CD8-positive, alpha-beta T cell (primary cell): ENCODE measurements at regions of chr6 and their contacts with region 1.

Region 1: GRCh38 chr6:24646782-24647181 is 791 bp upstream of the KIAA0319 start:
- DNase-seq: no peak
- ATAC-seq: no peak
- H3K4me3 ChIP-seq: no peak overlapping the region
- H3K4me3 Mint-ChIP-seq: peak overlapping the region; percentile 81
- H3K27ac ChIP-seq: no peak overlapping the region
- H3K27ac Mint-ChIP-seq: no peak overlapping the region
- H3K4me1 ChIP-seq: peaks cover 9% of the 10 kb centered on the region
- H3K4me1 Mint-ChIP-seq: peaks cover 12% of the 10 kb centered on the region
- H3K27me3 ChIP-seq: peaks cover 0 to 4% of the 10 kb centered on the region in 2 experiments
- H3K27me3 Mint-ChIP-seq: peaks cover 18% of the 10 kb centered on the region
- CTCF ChIP-seq: no peak

Region 2: DNA sequence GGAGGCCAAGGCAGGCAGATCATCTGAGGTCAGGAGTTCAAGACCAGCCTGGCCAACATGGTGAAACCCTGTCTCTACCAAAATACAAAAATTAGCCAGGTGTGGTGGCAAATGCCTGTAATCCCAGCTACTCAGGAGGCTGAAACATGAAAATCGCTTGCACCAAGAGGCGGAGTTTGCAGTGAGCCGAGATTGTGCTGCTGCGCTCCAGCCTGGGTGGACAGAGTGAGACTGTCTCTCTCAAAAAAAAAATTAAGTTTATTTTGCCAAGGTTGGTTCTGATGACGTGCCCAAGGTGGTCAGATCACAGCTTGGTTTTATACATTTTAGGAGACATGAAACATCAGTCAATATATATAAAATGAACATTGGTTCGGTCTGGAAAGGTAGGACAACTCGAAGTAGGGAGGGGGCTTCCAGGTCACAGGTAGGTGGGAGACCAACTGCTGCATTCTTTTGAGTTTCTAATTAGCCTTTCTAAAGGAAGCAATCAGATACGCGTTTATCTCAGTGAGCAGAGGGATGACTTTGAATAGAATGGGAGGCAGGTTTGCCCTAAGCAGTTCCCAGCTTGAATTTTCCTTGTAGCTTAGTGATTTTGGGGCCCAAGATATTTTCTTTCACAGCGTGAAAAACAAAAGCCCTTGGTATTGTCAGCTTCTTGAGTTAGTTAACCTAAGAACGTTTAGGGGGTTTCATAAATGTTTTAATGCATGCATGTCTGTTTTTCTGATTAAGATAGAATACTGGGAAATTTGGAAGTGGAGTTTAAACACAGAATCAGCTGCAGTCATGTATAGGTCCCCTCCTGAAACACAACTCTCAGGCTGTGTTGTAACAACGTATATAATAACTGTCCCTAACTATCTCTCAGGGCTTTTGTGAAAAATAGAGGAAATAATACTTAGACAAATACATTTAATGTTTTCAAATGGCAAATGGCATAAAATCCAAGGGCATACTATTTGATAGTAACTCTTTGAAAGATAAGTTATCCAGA is 36.8 kb after region 1 on chr6:
- CTCF ChIA-PET with region 1: no interaction called
- POLR2A ChIA-PET with region 1: no interaction called
- intact Hi-C with region 1: no loop called
- DNase-seq: no peak
- ATAC-seq: no peak
- H3K4me3 ChIP-seq: no peak overlapping the region
- H3K4me3 Mint-ChIP-seq: no peak overlapping the region
- H3K27ac ChIP-seq: no peak overlapping the region
- H3K27ac Mint-ChIP-seq: no peak overlapping the region
- H3K4me1 ChIP-seq: no peaks in the 10 kb centered on the region
- H3K4me1 Mint-ChIP-seq: peaks cover 3% of the 10 kb centered on the region
- H3K27me3 ChIP-seq: no peaks in the 10 kb centered on the region
- H3K27me3 Mint-ChIP-seq: no peaks in the 10 kb centered on the region
- CTCF ChIP-seq: no peak

Region 3: GRCh38 chr6:24774696-24775519 is 128.1 kb after region 1 on chr6 and contains the start of gene GMNN:
- CTCF ChIA-PET with region 1: no interaction called
- POLR2A ChIA-PET with region 1: no interaction called
- intact Hi-C with region 1: loop called in 1 of 2 experiments (anchors 5 kb)
- DNase-seq: peak; percentile 93 to 99 (median 98)
- ATAC-seq: peak; percentile 86
- H3K4me3 ChIP-seq: peak within 1 kb of the TSS; percentile 86 to 94
- H3K4me3 Mint-ChIP-seq: peak within 1 kb of the TSS; percentile 99
- H3K27ac ChIP-seq: peak within 1 kb of the TSS; percentile 83 to 85
- H3K27ac Mint-ChIP-seq: peak within 1 kb of the TSS; percentile 97
- H3K4me1 ChIP-seq: peaks cover 14% of the 10 kb centered on the region
- H3K4me1 Mint-ChIP-seq: peaks cover 22% of the 10 kb centered on the region
- H3K27me3 ChIP-seq: no peaks in the 10 kb centered on the region
- H3K27me3 Mint-ChIP-seq: no peaks in the 10 kb centered on the region
- CTCF ChIP-seq: no peak
- total RNA-seq, gene GMNN: 14.1 to 14.4 TPM

Region 4: DNA sequence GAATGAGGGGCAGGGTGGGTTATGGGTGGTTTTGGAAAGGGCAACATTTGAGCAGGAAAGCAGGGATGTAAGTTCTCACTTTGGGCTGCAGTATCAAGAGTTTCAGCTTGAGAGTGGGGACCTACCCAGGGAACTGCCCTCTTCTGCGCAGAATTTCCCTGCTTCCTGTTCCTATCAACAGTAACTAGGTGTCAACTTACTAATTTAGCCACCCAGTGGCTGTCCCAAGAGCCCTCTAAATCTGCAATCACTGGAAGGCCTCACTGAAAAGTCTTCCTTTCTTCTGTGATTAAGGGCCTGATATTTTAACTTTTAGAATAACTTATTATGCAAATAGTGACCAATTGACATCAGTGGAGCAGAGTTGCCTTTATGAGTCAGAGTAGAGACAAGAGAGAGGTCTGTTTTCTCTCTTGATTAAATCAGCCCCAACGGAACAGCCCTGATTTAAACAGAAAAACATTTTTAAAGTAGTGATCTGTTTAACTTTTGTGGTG is 407.1 kb after region 1 on chr6:
- CTCF ChIA-PET with region 1: no interaction called
- POLR2A ChIA-PET with region 1: no interaction called
- intact Hi-C with region 1: no loop called
- DNase-seq: peak in 2 of 9 experiments; percentile 62 to 76
- ATAC-seq: no peak
- H3K4me3 ChIP-seq: no peak overlapping the region
- H3K4me3 Mint-ChIP-seq: no peak overlapping the region
- H3K27ac ChIP-seq: no peak overlapping the region
- H3K27ac Mint-ChIP-seq: peak overlapping the region; percentile 11
- H3K4me1 ChIP-seq: peaks cover 41% of the 10 kb centered on the region
- H3K4me1 Mint-ChIP-seq: peaks cover 72% of the 10 kb centered on the region
- H3K27me3 ChIP-seq: no peaks in the 10 kb centered on the region
- H3K27me3 Mint-ChIP-seq: no peaks in the 10 kb centered on the region
- CTCF ChIP-seq: no peak